ENCODE measurements at regions of chr20 and their contacts with region 1.

Region 1: DNA sequence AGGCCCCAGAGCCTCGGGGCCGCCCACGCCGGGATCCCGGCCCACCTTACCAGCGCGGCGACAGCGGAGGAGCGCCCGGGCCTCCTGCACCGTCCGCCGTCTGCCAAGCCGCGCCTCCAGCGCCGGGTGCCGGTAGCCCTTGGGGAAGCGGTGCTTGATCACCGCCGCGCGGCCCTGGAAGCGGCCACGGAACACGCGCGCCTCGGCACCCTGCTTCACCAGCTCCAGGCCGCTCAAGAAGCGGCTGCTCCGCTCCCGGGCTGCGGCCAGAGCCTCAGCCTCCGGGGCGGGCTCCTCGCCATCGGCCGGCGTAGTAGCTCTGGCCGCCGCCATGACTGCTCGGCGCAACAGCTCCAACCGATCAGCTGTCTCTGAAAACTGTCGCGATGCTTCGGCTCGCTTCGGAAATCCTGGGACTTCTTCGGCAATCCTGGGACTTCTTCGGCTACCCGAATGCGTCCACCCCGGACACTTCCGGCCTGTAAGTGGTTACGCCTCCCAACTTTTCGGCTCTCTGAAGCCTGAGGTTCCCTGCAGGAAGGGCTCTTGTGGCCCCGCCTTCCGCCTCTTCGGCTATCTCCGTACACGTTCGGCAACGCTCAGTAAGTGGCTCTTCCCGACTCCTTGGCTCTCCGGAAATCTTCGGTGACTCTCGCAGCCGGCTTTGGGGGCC is at the start of gene TP53RK:
- ATAC-seq: peak; percentile 92 to 97 (median 96)
- H3K4me3 ChIP-seq: peak within 1 kb of the TSS; percentile 76 to 93 (median 87)
- H3K27ac ChIP-seq: peak within 1 kb of the TSS; percentile 90
- H3K4me1 ChIP-seq: peaks cover 12 to 26% of the 10 kb centered on the region in 2 donors
- total RNA-seq, gene TP53RK: 12.3 to 23.7 (median 15.0) TPM

Region 2: DNA sequence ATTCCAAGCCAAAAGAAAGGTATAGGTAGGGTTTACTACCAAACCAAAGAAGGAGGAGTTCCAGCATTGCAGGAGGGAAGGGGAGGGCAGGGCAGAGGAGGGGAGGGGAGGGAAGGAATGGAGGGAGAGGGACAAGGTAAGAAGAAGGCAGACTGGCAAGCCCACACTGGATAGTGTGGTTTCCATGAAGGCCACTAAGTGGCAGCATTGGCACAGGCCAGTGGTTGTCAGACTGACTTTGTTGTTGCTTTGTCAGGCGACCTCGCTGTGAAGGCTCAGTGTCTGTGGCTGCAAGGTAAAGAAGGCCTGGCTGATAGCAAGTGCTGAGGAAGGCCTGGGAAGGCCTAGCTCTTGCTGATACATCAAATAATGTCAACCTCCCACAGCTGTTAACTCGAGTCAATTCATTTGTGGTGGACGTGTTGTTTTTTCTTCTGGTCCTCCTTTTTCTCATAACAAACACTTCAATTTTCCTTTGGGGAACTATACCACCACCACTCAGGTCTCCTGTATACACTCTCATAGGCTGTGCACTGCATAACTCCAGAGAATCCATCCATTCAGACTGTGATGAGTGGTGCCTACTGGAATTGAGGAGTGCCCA is 168.1 kb before region 1 on chr20:
- in situ Hi-C with region 1: loop called in 1 of 9 experiments (anchors 25 kb)
- ATAC-seq: peak; percentile 75 to 97 (median 80)
- H3K4me3 ChIP-seq: no peak overlapping the region
- H3K27ac ChIP-seq: no peak overlapping the region
- H3K4me1 ChIP-seq: peaks cover 2 to 3% of the 10 kb centered on the region in 2 donors

Region 3: GRCh38 chr20:46562373-46563169 is 126.6 kb before region 1 on chr20:
- in situ Hi-C with region 1: loop called in 1 of 9 experiments (anchors 25 kb)
- ATAC-seq: peak; percentile 36 to 90 (median 85)
- H3K4me3 ChIP-seq: peak overlapping the region in 4 of 5 donors; percentile 7 to 29 (median 24)
- H3K27ac ChIP-seq: peak overlapping the region; percentile 46 to 74
- H3K4me1 ChIP-seq: peaks cover 40 to 49% of the 10 kb centered on the region in 2 donors

Region 4: GRCh38 chr20:47019121-47019824 is 330.1 kb after region 1 on chr20:
- in situ Hi-C with region 1: no loop called
- ATAC-seq: peak; percentile 44 to 91 (median 76)
- H3K4me3 ChIP-seq: no peak overlapping the region
- H3K27ac ChIP-seq: peak overlapping the region in 1 of 2 donors; percentile 1
- H3K4me1 ChIP-seq: peaks cover 0 to 3% of the 10 kb centered on the region in 2 donors

Measured in motor neuron (in vitro differentiated cells).